GM12878 (cell line): ENCODE measurements at regions of chr12 and their contacts with region 1.

Region 1: GRCh38 chr12:46661110-46661845 is 164.5 kb downstream of the SLC38A4 start:
- DNase-seq: peak; percentile 48
- ATAC-seq: peak; percentile 94
- H3K4me3 ChIP-seq: no peak overlapping the region
- H3K27ac ChIP-seq: no peak overlapping the region
- H3K4me1 ChIP-seq: peaks cover 7% of the 10 kb centered on the region
- H3K27me3 ChIP-seq: no peaks in the 10 kb centered on the region
- CTCF ChIP-seq: peak; percentile 77 to 85 (median 83)
- EP300 ChIP-seq: no peak
- POLR2A ChIP-seq: no peak
- RAD21 ChIP-seq: peak; percentile 93

Region 2: DNA sequence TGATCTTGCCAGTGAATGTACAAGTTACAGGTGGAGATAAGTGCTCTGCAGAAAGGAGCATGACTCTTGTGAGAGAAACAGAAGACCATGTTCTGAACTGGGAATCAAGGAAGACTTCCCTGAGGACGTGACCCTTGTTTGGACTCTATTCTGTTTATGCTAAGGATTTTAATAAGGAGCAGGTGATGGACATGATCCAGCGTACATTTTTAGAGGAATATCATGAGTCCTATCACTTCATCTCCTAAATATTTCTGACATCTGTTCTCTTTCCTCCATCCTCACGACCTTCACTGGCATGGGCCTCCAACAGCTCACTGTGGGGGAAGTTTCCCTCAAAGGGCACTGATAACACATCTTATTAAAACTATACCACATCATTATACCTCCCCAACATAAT is 384.5 kb before region 1 on chr12:
- CTCF ChIA-PET with region 1: no interaction called
- POLR2A ChIA-PET with region 1: no interaction called
- RAD21 ChIA-PET with region 1: no interaction called
- SMC1A ChIA-PET with region 1: interaction called, 4 read pairs
- in situ Hi-C with region 1: no loop called
- intact Hi-C with region 1: loop called (anchors 5 kb)
- DNase-seq: no peak
- ATAC-seq: no peak
- H3K4me3 ChIP-seq: no peak overlapping the region
- H3K27ac ChIP-seq: no peak overlapping the region
- H3K4me1 ChIP-seq: no peaks in the 10 kb centered on the region
- H3K27me3 ChIP-seq: no peaks in the 10 kb centered on the region
- CTCF ChIP-seq: no peak
- EP300 ChIP-seq: no peak
- POLR2A ChIP-seq: no peak
- RAD21 ChIP-seq: no peak

Region 3: DNA sequence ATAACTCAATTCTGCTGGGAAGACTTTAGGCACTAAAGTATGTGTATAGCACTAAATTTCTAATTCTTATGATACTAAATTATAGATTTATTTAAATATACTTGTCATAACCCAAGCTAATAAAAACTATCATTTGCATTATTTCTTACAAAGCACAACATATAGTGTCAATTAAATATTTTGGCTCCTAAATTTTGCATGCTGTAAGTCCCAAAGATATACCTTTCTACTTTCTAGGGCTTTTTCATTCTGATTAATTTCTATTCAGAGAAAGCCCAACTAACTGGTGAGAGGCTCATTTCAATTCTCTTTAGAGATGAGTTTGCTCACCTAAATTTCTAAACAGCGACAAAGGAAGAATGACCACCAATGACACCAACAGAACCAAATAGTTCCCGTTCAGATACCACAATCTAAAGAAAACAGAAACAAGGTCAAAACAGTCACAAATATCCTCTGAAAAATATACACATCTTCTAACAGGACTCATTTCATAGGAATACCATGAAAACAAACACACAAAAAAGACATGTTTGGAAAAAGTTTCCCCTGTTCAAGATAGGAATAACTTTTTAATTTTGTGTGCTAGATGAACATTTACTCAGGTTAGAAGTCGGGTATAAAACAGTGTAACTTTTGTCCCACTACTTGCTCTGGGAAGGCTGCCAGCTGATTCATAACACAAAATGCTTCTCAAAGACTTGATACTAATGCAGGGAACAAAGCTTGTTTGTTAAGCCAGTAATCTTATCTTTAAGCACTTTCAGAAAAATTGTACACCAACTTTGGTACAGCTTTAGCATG is 296.3 kb before region 1 on chr12:
- CTCF ChIA-PET with region 1: interaction called, 4 read pairs
- POLR2A ChIA-PET with region 1: interaction called, 3 read pairs
- RAD21 ChIA-PET with region 1: interaction called, 13 read pairs
- SMC1A ChIA-PET with region 1: interaction called, 10 read pairs
- in situ Hi-C with region 1: no loop called
- intact Hi-C with region 1: loop called (anchors 5 kb)
- DNase-seq: no peak
- ATAC-seq: peak; percentile 37
- H3K4me3 ChIP-seq: peak overlapping the region; percentile 34; the same call in 1 of the 2 replicates
- H3K27ac ChIP-seq: peak overlapping the region; percentile 22
- H3K4me1 ChIP-seq: peaks cover 37% of the 10 kb centered on the region
- H3K27me3 ChIP-seq: no peaks in the 10 kb centered on the region
- CTCF ChIP-seq: no peak
- EP300 ChIP-seq: 0 out of 4 replicates have a peak, but pooled peaks of 1 of the 2 experiments have one; percentile 42
- POLR2A ChIP-seq: no peak
- RAD21 ChIP-seq: no peak

Region 4: DNA sequence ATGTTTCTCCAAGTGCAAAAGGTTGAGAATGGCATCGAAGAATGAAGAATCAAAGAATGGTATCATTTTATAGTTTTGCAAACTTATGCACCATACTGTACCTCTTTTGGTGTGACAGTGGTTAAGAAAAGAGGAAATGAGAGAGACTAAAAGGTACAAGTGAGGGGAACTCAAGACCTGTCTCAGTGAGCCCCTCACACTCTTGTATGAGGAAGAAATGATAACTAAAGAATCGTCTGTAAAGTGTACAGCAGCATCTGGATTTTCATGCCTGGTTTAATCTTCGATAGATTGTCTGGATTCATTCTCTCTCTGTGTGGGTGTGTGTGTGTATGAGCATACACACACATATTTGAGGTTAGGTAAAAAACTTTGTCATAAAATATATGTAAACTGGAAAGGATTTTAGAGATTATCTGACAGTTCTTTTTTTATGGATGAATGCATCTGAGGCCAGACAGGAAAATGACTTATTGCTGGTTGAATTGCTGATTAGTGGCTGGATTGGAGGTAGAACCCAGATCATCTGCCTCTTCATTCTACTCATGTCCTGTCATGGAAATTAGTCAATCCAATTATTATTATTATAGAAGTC is 272.8 kb before region 1 on chr12:
- CTCF ChIA-PET with region 1: interaction called, 16 read pairs
- POLR2A ChIA-PET with region 1: interaction called, 4 read pairs
- RAD21 ChIA-PET with region 1: interaction called, 17 read pairs
- SMC1A ChIA-PET with region 1: interaction called, 10 read pairs
- in situ Hi-C with region 1: no loop called
- intact Hi-C with region 1: no loop called
- DNase-seq: peak; percentile 75
- ATAC-seq: peak; percentile 68
- H3K4me3 ChIP-seq: peak overlapping the region; percentile 37; the same call in 1 of the 2 replicates
- H3K27ac ChIP-seq: peak overlapping the region; percentile 89
- H3K4me1 ChIP-seq: peaks cover 53% of the 10 kb centered on the region
- H3K27me3 ChIP-seq: no peaks in the 10 kb centered on the region
- CTCF ChIP-seq: no peak
- EP300 ChIP-seq: peak; percentile 54 to 93; a peak in 3 of 4 replicates
- POLR2A ChIP-seq: no peak
- RAD21 ChIP-seq: no peak; the same call in 1 of the 2 replicates

Region 5: GRCh38 chr12:46585854-46586621 is 75.2 kb before region 1 on chr12:
- CTCF ChIA-PET with region 1: no interaction called
- POLR2A ChIA-PET with region 1: no interaction called
- RAD21 ChIA-PET with region 1: no interaction called
- SMC1A ChIA-PET with region 1: no interaction called
- in situ Hi-C with region 1: no loop called
- intact Hi-C with region 1: no loop called
- DNase-seq: no peak
- ATAC-seq: no peak
- H3K4me3 ChIP-seq: no peak overlapping the region
- H3K27ac ChIP-seq: no peak overlapping the region
- H3K4me1 ChIP-seq: no peaks in the 10 kb centered on the region
- H3K27me3 ChIP-seq: no peaks in the 10 kb centered on the region
- CTCF ChIP-seq: no peak
- EP300 ChIP-seq: no peak
- POLR2A ChIP-seq: no peak
- RAD21 ChIP-seq: no peak

Region 6: GRCh38 chr12:46650607-46651088 is 10.6 kb before region 1 on chr12:
- CTCF ChIA-PET with region 1: interaction called, 10 read pairs
- POLR2A ChIA-PET with region 1: no interaction called
- RAD21 ChIA-PET with region 1: interaction called, 3 read pairs
- SMC1A ChIA-PET with region 1: interaction called, 11 read pairs
- in situ Hi-C with region 1: no loop called
- intact Hi-C with region 1: no loop called
- DNase-seq: no peak
- ATAC-seq: no peak
- H3K4me3 ChIP-seq: no peak overlapping the region
- H3K27ac ChIP-seq: no peak overlapping the region
- H3K4me1 ChIP-seq: no peaks in the 10 kb centered on the region
- H3K27me3 ChIP-seq: no peaks in the 10 kb centered on the region
- CTCF ChIP-seq: no peak
- EP300 ChIP-seq: no peak
- POLR2A ChIP-seq: no peak
- RAD21 ChIP-seq: no peak